ENCODE measurements at regions of chr3 and their contacts with region 1.

Region 1: DNA sequence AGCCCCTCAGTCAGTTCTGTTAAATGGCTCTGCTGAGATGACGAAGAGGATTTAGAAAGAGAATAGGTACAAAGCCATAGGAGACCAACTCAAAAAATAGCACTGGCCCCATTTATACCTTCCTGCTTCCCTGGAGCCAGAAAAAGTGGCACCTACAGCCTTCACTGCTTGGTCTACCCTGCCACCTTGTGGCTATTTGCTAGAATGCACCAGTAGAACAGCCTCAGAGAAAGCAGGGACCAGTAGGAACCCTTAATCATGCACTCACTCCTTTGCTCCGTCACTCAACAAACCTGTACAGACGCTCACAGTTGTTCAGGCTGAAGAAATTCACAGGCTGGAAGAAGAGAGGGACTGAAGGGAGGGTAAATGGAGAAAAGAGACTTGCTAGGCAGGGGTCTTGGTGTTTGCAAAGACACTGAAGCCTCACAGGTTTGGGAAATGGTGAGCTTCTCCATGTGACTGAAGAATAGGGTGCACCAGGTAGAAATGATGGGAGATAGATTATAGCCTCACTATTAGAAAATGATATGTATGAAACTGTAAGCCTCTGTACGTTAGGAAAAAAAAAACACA is 12.1 kb upstream of the RTP2 start:
- DNase-seq: peak; percentile 53 to 85 (median 61)
- ATAC-seq: peak; percentile 90
- H3K4me3 ChIP-seq: no peak overlapping the region
- H3K4me3 Mint-ChIP-seq: no peak overlapping the region
- H3K27ac ChIP-seq: no peak overlapping the region
- H3K27ac Mint-ChIP-seq: no peak overlapping the region
- H3K4me1 ChIP-seq: peaks cover 15% of the 10 kb centered on the region
- H3K4me1 Mint-ChIP-seq: peaks cover 14% of the 10 kb centered on the region
- H3K27me3 ChIP-seq: no peaks in the 10 kb centered on the region
- H3K27me3 Mint-ChIP-seq: no peaks in the 10 kb centered on the region
- CTCF ChIP-seq: peak; percentile 89

Region 2: DNA sequence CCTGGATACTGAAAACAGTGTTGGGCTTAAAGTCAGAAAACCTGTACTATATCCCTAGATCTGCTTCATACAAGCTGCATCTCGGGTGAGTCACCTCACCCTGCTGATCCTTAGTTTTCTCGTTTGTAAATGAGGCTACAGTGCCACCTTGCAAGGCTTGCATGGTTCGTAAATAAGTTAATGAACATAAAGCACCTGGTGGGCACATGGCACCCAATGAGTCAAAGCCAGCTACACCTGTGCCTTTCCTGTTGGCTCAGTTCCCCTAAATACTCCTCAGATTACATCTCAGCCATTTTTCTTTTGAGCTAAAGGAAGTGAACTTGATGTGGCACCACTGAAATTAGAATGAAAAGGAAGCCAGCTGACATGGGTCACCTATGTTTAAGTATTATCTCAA is 490.7 kb before region 1 on chr3:
- CTCF ChIA-PET with region 1: no interaction called
- POLR2A ChIA-PET with region 1: no interaction called
- intact Hi-C with region 1: loop called (anchors 1 to 5 kb)
- DNase-seq: no peak
- ATAC-seq: no peak
- H3K4me3 ChIP-seq: no peak overlapping the region
- H3K4me3 Mint-ChIP-seq: no peak overlapping the region
- H3K27ac ChIP-seq: no peak overlapping the region
- H3K27ac Mint-ChIP-seq: no peak overlapping the region
- H3K4me1 ChIP-seq: no peaks in the 10 kb centered on the region
- H3K4me1 Mint-ChIP-seq: no peaks in the 10 kb centered on the region
- H3K27me3 ChIP-seq: peaks cover 0 to 6% of the 10 kb centered on the region in 2 experiments
- H3K27me3 Mint-ChIP-seq: peaks cover 5% of the 10 kb centered on the region
- CTCF ChIP-seq: no peak

Region 3: GRCh38 chr3:187319699-187320302 is 394.7 kb before region 1 on chr3:
- CTCF ChIA-PET with region 1: interaction called, 28 read pairs
- POLR2A ChIA-PET with region 1: no interaction called
- intact Hi-C with region 1: loop called (anchors 1 kb)
- DNase-seq: peak; percentile 16 to 71 (median 38)
- ATAC-seq: peak; percentile 77
- H3K4me3 ChIP-seq: no peak overlapping the region
- H3K4me3 Mint-ChIP-seq: no peak overlapping the region
- H3K27ac ChIP-seq: no peak overlapping the region
- H3K27ac Mint-ChIP-seq: no peak overlapping the region
- H3K4me1 ChIP-seq: peaks cover 14% of the 10 kb centered on the region
- H3K4me1 Mint-ChIP-seq: peaks cover 15% of the 10 kb centered on the region
- H3K27me3 ChIP-seq: peaks cover 13 to 15% of the 10 kb centered on the region in 2 experiments
- H3K27me3 Mint-ChIP-seq: peaks cover 63% of the 10 kb centered on the region
- CTCF ChIP-seq: no peak

Region 4: DNA sequence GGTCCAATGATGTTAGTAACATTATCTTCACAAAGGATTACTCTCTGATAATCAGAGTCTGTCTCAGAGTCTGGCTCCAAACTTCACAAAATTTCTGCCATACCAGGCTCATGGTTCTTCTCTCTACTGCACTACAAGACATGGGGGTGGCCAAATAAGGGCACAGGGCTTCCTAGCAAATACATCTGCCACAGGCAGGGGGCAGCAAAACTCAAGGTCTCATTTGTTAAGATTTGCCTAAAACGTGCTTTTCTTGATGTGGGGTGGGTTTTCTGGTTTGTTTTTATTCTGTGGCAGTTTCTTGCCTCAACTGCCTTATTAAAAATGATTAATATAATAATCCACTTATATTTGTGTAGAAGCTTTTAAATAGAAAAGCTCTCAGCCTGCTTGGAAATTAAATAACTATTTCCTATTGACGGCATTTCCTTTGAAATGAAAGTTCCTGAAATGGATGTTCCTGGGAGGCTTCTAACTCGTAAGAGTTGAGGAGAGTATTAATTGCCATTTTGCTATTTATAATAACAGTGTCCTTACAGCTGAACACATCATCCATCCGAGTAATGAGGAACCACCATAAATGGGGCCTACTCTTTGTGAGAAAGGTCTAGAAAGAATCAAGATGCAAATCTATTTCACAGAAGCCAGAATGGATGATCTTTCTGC is 98.1 kb before region 1 on chr3:
- CTCF ChIA-PET with region 1: no interaction called
- POLR2A ChIA-PET with region 1: no interaction called
- intact Hi-C with region 1: loop called (anchors 2 to 10 kb)
- DNase-seq: peak; percentile 8 to 70 (median 32)
- ATAC-seq: peak; percentile 52
- H3K4me3 ChIP-seq: no peak overlapping the region
- H3K4me3 Mint-ChIP-seq: no peak overlapping the region
- H3K27ac ChIP-seq: no peak overlapping the region
- H3K27ac Mint-ChIP-seq: no peak overlapping the region
- H3K4me1 ChIP-seq: no peaks in the 10 kb centered on the region
- H3K4me1 Mint-ChIP-seq: no peaks in the 10 kb centered on the region
- H3K27me3 ChIP-seq: no peaks in the 10 kb centered on the region
- H3K27me3 Mint-ChIP-seq: peaks cover 5% of the 10 kb centered on the region
- CTCF ChIP-seq: peak; percentile 76